Psoas muscle (tissue), 8 donors: ENCODE measurements at regions of chr11 and their contacts with region 1.

Region 1: GRCh38 chr11:121298774-121299173 is 6.2 kb downstream of the SC5D start:
- DNase-seq: no peak
- ATAC-seq: no peak
- H3K4me3 ChIP-seq: no peak overlapping the region
- H3K27ac ChIP-seq: no peak overlapping the region
- H3K4me1 ChIP-seq: peaks cover 5% of the 10 kb centered on the region
- H3K27me3 ChIP-seq: no peaks in the 10 kb centered on the region
- CTCF ChIP-seq: no peak

Region 2: GRCh38 chr11:120079750-120080490 is 1218.9 kb before region 1 on chr11:
- intact Hi-C with region 1: loop called in 1 of 2 experiments (anchors 5 kb)
- DNase-seq: no peak
- ATAC-seq: no peak
- H3K4me3 ChIP-seq: no peak overlapping the region
- H3K27ac ChIP-seq: no peak overlapping the region
- H3K4me1 ChIP-seq: no peaks in the 10 kb centered on the region
- H3K27me3 ChIP-seq: peaks cover 0 to 9% (median 0%) of the 10 kb centered on the region in 3 donors
- CTCF ChIP-seq: peak; percentile 48